CD4-positive, alpha-beta T cell (primary cell): ENCODE measurements at regions of chr6 and their contacts with region 1.

Region 1: DNA sequence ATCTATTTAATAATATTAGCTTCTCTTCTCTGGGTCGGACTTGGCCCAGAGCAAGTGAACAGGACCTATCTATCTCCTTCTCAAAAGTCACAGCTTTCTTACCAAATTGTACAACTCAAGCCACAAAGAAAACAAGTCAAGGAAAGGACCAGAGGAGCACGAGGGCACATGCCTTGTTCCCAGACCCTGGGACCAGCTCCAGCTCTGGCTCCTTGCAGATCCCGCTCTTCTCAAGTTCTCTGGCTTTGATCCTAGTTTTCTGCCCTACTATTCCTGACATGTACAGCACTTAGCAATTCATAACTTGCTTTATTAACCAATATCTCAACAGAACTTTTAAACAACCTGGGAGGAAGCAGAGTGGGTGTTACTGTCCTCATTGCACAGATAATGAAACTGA is 185.9 kb downstream of the ESR1 start:
- DNase-seq: no peak
- ATAC-seq: no peak
- H3K4me3 ChIP-seq: no peak overlapping the region
- H3K4me3 Mint-ChIP-seq: no peak overlapping the region
- H3K27ac ChIP-seq: no peak overlapping the region
- H3K27ac Mint-ChIP-seq: no peak overlapping the region
- H3K4me1 ChIP-seq: no peaks in the 10 kb centered on the region
- H3K4me1 Mint-ChIP-seq: no peaks in the 10 kb centered on the region
- H3K27me3 ChIP-seq: no peaks in the 10 kb centered on the region
- H3K27me3 Mint-ChIP-seq: no peaks in the 10 kb centered on the region
- CTCF ChIP-seq: no peak

Region 2: GRCh38 chr6:151675746-151676416 is 317.5 kb before region 1 on chr6:
- CTCF ChIA-PET with region 1: no interaction called
- POLR2A ChIA-PET with region 1: no interaction called
- intact Hi-C with region 1: no loop called
- DNase-seq: peak; percentile 16 to 78 (median 36)
- ATAC-seq: peak; percentile 88
- H3K4me3 ChIP-seq: no peak overlapping the region
- H3K4me3 Mint-ChIP-seq: no peak overlapping the region
- H3K27ac ChIP-seq: no peak overlapping the region
- H3K27ac Mint-ChIP-seq: no peak overlapping the region
- H3K4me1 ChIP-seq: no peaks in the 10 kb centered on the region
- H3K4me1 Mint-ChIP-seq: no peaks in the 10 kb centered on the region
- H3K27me3 ChIP-seq: no peaks in the 10 kb centered on the region
- H3K27me3 Mint-ChIP-seq: no peaks in the 10 kb centered on the region
- CTCF ChIP-seq: peak; percentile 87

Region 3: DNA sequence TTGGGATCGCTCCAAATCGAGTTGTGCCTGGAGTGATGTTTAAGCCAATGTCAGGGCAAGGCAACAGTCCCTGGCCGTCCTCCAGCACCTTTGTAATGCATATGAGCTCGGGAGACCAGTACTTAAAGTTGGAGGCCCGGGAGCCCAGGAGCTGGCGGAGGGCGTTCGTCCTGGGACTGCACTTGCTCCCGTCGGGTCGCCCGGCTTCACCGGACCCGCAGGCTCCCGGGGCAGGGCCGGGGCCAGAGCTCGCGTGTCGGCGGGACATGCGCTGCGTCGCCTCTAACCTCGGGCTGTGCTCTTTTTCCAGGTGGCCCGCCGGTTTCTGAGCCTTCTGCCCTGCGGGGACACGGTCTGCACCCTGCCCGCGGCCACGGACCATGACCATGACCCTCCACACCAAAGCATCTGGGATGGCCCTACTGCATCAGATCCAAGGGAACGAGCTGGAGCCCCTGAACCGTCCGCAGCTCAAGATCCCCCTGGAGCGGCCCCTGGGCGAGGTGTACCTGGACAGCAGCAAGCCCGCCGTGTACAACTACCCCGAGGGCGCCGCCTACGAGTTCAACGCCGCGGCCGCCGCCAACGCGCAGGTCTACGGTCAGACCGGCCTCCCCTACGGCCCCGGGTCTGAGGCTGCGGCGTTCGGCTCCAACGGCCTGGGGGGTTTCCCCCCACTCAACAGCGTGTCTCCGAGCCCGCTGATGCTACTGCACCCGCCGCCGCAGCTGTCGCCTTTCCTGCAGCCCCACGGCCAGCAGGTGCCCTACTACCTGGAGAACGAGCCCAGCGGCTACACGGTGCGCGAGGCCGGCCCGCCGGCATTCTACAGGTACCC is 185.6 kb before region 1 on chr6 and contains the start of gene ESR1:
- CTCF ChIA-PET with region 1: no interaction called
- POLR2A ChIA-PET with region 1: no interaction called
- intact Hi-C with region 1: no loop called
- DNase-seq: peak in 1 of 14 experiments; percentile 0
- ATAC-seq: no peak
- H3K4me3 ChIP-seq: peak within 1 kb of the TSS; percentile 32
- H3K4me3 Mint-ChIP-seq: peak within 1 kb of the TSS; percentile 58
- H3K27ac ChIP-seq: no peak within 1 kb of the TSS
- H3K27ac Mint-ChIP-seq: no peak within 1 kb of the TSS
- H3K4me1 ChIP-seq: peaks cover 13% of the 10 kb centered on the region
- H3K4me1 Mint-ChIP-seq: peaks cover 15% of the 10 kb centered on the region
- H3K27me3 ChIP-seq: peaks cover 21 to 49% of the 10 kb centered on the region in 2 experiments
- H3K27me3 Mint-ChIP-seq: peaks cover 66% of the 10 kb centered on the region
- CTCF ChIP-seq: no peak
- total RNA-seq, gene ESR1: 2.6 to 2.8 TPM

Region 4: DNA sequence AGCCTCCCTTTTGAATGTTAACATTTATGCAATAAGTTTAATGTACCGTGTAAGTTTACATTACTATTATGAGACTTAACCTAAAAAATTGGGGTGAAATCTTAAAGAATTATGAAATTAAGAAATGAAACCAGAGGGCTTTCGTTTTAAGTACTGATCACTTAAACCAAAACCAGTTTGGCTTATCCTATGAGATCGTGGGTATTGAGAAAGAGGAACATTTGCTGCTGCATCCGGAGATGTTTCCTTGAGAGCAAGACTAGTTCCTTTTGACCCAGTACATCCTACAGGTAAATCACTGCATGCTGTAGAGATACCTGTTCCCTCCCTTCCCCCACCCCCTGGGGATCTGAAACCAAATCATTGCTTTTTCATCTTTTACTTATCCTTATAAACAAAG is 15.4 kb after region 1 on chr6:
- CTCF ChIA-PET with region 1: no interaction called
- POLR2A ChIA-PET with region 1: no interaction called
- intact Hi-C with region 1: loop called in 1 of 2 experiments (anchors 2 kb)
- DNase-seq: no peak
- ATAC-seq: no peak
- H3K4me3 ChIP-seq: no peak overlapping the region
- H3K4me3 Mint-ChIP-seq: no peak overlapping the region
- H3K27ac ChIP-seq: no peak overlapping the region
- H3K27ac Mint-ChIP-seq: no peak overlapping the region
- H3K4me1 ChIP-seq: no peaks in the 10 kb centered on the region
- H3K4me1 Mint-ChIP-seq: no peaks in the 10 kb centered on the region
- H3K27me3 ChIP-seq: no peaks in the 10 kb centered on the region
- H3K27me3 Mint-ChIP-seq: no peaks in the 10 kb centered on the region
- CTCF ChIP-seq: no peak

Region 5: DNA sequence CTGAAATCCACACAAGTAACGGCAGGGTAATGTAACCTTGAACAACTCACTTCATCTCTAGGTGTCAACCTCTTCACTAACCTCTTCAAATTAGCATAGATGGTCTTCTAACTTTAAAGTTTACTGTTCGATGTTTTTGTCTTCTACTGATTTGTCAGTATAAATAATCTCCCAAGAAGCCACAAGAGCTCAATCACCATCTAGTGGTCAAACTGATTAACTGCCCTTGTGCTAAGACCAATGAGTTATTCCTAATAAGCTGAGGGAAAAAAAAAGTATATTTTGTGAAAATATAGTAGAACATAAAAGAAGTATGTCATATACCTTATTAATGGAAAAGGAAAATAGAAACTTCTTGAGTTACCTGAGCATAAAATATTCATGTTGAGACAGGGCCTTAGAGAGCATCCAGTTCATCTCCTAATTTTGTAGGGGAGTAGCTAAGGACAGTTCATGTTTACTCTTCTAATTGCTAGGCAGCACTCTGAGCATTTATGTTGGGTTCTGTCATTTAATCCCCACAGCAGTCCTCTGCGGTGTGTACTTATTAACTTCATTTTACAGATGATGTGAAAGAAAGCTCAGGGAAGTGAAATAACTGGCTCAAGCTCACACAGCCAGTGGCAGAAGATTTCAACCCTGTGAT is 131.2 kb after region 1 on chr6:
- CTCF ChIA-PET with region 1: no interaction called
- POLR2A ChIA-PET with region 1: no interaction called
- intact Hi-C with region 1: no loop called
- DNase-seq: peak in 3 of 14 experiments; percentile 38 to 51 (median 49)
- ATAC-seq: peak; percentile 48
- H3K4me3 ChIP-seq: no peak overlapping the region
- H3K4me3 Mint-ChIP-seq: no peak overlapping the region
- H3K27ac ChIP-seq: no peak overlapping the region
- H3K27ac Mint-ChIP-seq: peak overlapping the region; percentile 57
- H3K4me1 ChIP-seq: no peaks in the 10 kb centered on the region
- H3K4me1 Mint-ChIP-seq: peaks cover 4% of the 10 kb centered on the region
- H3K27me3 ChIP-seq: no peaks in the 10 kb centered on the region
- H3K27me3 Mint-ChIP-seq: no peaks in the 10 kb centered on the region
- CTCF ChIP-seq: peak; percentile 50